ENCODE measurements at regions of chr4 and their contacts with region 1.

Region 1: GRCh38 chr4:77618383-77619122 is 12.9 kb downstream of the CXCL13 start:
- DNase-seq: peak; percentile 76
- ATAC-seq: peak; percentile 96
- H3K4me3 Mint-ChIP-seq: no peak overlapping the region
- H3K27ac Mint-ChIP-seq: peak overlapping the region; percentile 34
- H3K4me1 Mint-ChIP-seq: peaks cover 6% of the 10 kb centered on the region
- H3K27me3 Mint-ChIP-seq: peaks cover 14% of the 10 kb centered on the region

Region 2: GRCh38 chr4:77104791-77105540 is 513.6 kb before region 1 on chr4:
- CTCF ChIA-PET with region 1: no interaction called
- POLR2A ChIA-PET with region 1: no interaction called
- intact Hi-C with region 1: no loop called
- DNase-seq: no peak
- ATAC-seq: no peak
- H3K4me3 Mint-ChIP-seq: no peak overlapping the region
- H3K27ac Mint-ChIP-seq: no peak overlapping the region
- H3K4me1 Mint-ChIP-seq: peaks cover 9% of the 10 kb centered on the region
- H3K27me3 Mint-ChIP-seq: peaks cover 9% of the 10 kb centered on the region

Region 3: GRCh38 chr4:77240469-77241066 is 378.0 kb before region 1 on chr4:
- CTCF ChIA-PET with region 1: interaction called, 4 read pairs
- POLR2A ChIA-PET with region 1: no interaction called
- intact Hi-C with region 1: loop called in 1 of 2 experiments (anchors 5 kb)
- DNase-seq: peak; percentile 86
- ATAC-seq: peak; percentile 81
- H3K4me3 Mint-ChIP-seq: no peak overlapping the region
- H3K27ac Mint-ChIP-seq: no peak overlapping the region
- H3K4me1 Mint-ChIP-seq: no peaks in the 10 kb centered on the region
- H3K27me3 Mint-ChIP-seq: peaks cover 8% of the 10 kb centered on the region

Region 4: GRCh38 chr4:77367638-77368037 is 250.9 kb before region 1 on chr4:
- CTCF ChIA-PET with region 1: interaction called, 14 read pairs
- POLR2A ChIA-PET with region 1: no interaction called
- intact Hi-C with region 1: loop called (anchors 1 to 5 kb)
- DNase-seq: no peak
- ATAC-seq: no peak
- H3K4me3 Mint-ChIP-seq: no peak overlapping the region
- H3K27ac Mint-ChIP-seq: no peak overlapping the region
- H3K4me1 Mint-ChIP-seq: no peaks in the 10 kb centered on the region
- H3K27me3 Mint-ChIP-seq: no peaks in the 10 kb centered on the region

Region 5: GRCh38 chr4:77385124-77385969 is 233.2 kb before region 1 on chr4:
- CTCF ChIA-PET with region 1: interaction called, 16 read pairs
- POLR2A ChIA-PET with region 1: no interaction called
- intact Hi-C with region 1: loop called (anchors 1 kb)
- DNase-seq: peak; percentile 77
- ATAC-seq: peak; percentile 76
- H3K4me3 Mint-ChIP-seq: no peak overlapping the region
- H3K27ac Mint-ChIP-seq: no peak overlapping the region
- H3K4me1 Mint-ChIP-seq: peaks cover 2% of the 10 kb centered on the region
- H3K27me3 Mint-ChIP-seq: no peaks in the 10 kb centered on the region

Region 6: GRCh38 chr4:77465271-77465670 is 153.3 kb before region 1 on chr4:
- CTCF ChIA-PET with region 1: interaction called, 31 read pairs
- POLR2A ChIA-PET with region 1: no interaction called
- intact Hi-C with region 1: loop called (anchors 1 kb)
- DNase-seq: peak; percentile 66
- ATAC-seq: peak; percentile 68
- H3K4me3 Mint-ChIP-seq: no peak overlapping the region
- H3K27ac Mint-ChIP-seq: no peak overlapping the region
- H3K4me1 Mint-ChIP-seq: no peaks in the 10 kb centered on the region
- H3K27me3 Mint-ChIP-seq: peaks cover 16% of the 10 kb centered on the region

Region 7: GRCh38 chr4:77629885-77630284 is 11.3 kb after region 1 on chr4:
- CTCF ChIA-PET with region 1: interaction called, 15 read pairs
- POLR2A ChIA-PET with region 1: interaction called, 4 read pairs
- intact Hi-C with region 1: no loop called
- DNase-seq: peak; percentile 40
- ATAC-seq: peak; percentile 93
- H3K4me3 Mint-ChIP-seq: no peak overlapping the region
- H3K27ac Mint-ChIP-seq: peak overlapping the region; percentile 23
- H3K4me1 Mint-ChIP-seq: peaks cover 16% of the 10 kb centered on the region
- H3K27me3 Mint-ChIP-seq: peaks cover 2% of the 10 kb centered on the region